HEK293 (cell line): ENCODE measurements at regions of chr9 and their contacts with region 1.

Region 1: DNA sequence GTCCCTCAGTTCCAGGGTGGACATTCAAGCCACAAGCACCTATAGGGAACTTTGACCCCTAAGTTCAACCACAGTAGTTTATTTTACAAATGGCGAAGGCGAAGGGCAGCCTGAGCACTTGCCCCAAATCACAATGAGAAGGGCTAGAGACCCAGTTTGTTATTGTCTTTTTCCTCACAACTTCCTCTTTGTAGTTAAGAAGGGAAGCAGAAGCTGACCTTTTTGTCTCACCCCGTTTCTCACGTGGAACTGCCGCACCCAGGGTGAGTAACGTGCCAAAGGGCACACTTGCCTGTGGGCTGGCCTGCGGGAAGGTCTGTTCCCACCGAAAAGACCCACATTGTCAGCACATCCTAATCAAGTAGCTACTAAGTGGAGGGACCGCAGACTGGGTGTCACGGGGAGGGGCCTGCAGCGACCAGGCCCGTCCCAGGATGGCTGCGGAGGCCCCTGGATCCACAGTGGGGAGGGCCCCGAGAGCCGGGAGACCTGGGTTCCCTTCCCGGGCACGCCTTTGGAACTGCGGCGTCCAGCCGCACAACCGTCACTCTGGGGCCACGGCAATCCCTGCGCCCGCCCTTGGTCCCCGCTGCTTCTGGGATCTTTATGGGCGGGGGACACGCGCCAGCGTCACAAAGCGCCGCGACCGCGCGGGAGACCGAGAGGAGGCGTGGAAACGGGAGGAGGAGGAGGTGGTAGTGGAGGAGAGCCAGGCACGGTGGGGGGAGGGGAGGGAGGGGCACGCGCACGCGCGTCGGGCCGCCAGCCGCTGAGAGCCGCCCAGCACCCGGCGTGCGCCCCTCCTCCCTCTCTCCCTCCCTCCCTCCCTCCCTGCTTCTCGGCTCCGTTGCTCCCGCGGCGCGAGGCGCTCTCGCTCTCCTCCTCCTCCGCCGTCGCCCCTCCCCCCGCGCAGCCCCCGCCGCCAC is at the start of gene UBE2R2:
- H3K4me3 ChIP-seq: peak within 1 kb of the TSS; percentile 60
- H3K27ac ChIP-seq: peak within 1 kb of the TSS; percentile 96
- H3K4me1 ChIP-seq: peaks cover 2% of the 10 kb centered on the region; the same call in 1 of the 2 replicates
- CTCF ChIP-seq: no peak

Region 2: DNA sequence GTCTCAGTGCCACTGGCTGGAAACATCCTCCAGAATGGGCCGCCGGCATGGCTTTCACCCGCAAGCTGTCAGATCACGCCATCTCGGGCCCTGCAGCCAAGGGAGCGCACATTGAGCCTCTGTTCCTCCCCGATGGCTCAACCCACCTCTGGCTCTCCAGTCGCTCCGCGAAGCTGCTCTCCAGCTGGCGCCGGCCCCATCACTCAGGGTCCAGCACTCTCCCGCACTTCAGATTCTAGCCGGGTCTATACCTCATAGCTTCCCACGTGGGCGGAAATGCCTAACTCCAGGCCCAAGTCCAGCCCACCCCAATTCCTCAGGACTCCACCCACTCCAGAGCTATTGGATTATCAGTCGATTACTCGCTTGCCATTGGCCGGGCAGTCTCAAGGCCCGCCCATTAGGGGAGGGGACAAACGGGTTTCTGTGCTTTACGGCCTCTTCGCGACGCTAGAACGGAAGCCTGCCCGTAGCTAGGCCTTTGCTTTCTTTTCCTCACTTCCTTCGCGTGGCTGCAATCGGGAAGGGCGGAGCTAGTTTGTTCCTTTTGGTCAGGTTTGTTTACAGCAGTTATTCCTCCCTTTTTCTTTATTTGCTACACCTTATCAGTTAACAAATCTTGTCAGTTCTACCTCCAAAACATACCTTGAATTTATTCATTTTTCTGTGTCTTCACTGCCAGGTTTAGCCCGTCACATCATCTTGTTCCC is 342.8 kb before region 1 on chr9 and contains the start of gene NOL6:
- CTCF ChIA-PET with region 1: no interaction called
- POLR2A ChIA-PET with region 1: no interaction called
- H3K4me3 ChIP-seq: peak within 1 kb of the TSS; percentile 91
- H3K27ac ChIP-seq: no peak within 1 kb of the TSS
- H3K4me1 ChIP-seq: no peaks in the 10 kb centered on the region
- CTCF ChIP-seq: no peak

Region 3: GRCh38 chr9:33614001-33614687 is 202.4 kb before region 1 on chr9:
- CTCF ChIA-PET with region 1: no interaction called
- POLR2A ChIA-PET with region 1: no interaction called
- H3K4me3 ChIP-seq: no peak overlapping the region
- H3K27ac ChIP-seq: no peak overlapping the region
- H3K4me1 ChIP-seq: no peaks in the 10 kb centered on the region
- CTCF ChIP-seq: no peak

Region 4: DNA sequence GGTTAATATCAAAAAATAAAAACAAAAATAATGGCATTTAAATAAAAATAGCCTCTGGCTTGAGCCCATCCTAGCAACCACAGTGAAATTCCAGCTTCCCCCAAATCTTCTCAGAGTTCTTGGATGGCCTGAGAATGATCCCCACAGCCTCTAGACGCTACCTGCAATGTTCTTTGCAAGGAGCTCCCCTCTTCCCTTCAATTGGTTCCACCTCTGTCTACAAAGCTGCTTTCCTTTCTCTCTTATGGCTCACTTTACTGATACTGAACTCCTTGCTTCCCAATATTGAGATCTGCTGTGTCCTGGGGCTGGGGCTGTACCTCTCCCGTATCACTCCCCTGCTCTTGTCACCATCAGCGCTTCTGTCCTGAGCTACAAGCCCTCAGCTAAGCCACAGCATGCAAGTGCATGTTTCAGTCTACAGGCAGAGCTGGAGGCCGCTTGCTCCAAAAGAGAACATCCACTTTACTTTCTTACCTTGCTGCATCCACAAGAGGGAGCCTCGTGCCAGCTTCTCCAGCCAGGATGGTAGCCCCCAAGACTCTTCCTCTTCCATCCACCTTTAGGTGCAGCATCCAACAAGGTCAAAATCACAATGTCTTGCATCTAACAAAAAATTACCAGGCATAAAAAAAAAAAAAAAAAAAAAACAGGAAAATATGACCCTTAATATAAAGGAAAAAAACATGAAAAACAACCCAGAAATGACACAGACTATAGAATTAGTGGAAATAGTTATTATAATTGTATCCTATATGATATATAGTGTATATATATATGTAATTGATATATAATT is 78.6 kb before region 1 on chr9:
- CTCF ChIA-PET with region 1: interaction called, 18 read pairs
- POLR2A ChIA-PET with region 1: interaction called, 3 read pairs
- H3K4me3 ChIP-seq: no peak overlapping the region
- H3K27ac ChIP-seq: no peak overlapping the region
- H3K4me1 ChIP-seq: no peaks in the 10 kb centered on the region
- CTCF ChIP-seq: peak; percentile 65

Region 5: DNA sequence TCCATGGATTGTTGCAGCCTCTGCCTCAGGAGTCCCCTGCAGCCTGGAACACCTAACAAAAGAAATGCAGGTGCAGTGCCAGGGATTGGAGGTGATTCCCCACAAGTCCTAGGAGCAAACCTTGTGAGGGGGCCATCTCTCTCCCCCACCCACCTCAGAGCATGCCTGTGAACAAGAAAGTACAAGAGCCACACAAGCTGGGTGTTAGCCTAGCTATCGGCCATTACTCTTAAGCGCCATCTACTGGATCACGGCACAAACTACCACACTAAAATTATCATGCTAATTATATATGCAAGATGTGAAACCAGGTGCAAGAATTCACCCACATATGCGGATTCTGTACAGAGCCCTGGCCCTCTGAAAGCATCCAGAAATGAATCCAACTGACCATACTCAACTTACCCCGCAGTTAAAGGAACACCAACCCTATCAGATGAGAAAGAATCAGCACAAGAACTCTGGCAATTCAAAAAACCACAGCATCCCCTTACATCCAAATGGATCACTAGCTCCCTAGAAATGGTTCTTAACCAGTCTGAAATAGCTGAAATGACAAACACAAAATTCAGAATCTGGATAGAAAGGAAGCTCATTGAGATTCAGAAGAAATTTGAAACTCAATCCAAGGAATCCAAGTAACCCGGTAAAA is 37.8 kb before region 1 on chr9:
- CTCF ChIA-PET with region 1: interaction called, 12 read pairs
- POLR2A ChIA-PET with region 1: no interaction called
- H3K4me3 ChIP-seq: no peak overlapping the region
- H3K27ac ChIP-seq: no peak overlapping the region
- H3K4me1 ChIP-seq: no peaks in the 10 kb centered on the region
- CTCF ChIP-seq: no peak

Region 6: DNA sequence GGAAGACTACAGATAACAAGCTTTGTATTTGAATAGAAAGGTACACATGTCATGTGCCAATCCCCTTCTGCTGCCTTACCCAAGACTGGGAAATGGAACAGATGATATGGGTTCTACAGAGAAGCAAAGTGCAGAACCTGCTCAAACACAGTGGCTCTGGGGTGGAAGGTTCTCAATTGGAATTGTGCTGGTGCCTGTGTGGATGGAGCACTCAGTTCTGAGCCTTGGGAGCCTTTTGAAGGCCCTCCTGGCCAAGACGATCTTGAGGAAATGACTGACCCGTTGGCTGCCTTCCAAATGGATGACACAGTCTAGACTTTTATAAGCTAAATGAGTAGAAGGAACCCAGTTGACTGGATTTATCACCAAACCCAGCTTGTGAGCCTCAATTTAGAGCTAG is 25.5 kb before region 1 on chr9:
- CTCF ChIA-PET with region 1: interaction called, 19 read pairs
- POLR2A ChIA-PET with region 1: no interaction called
- H3K4me3 ChIP-seq: no peak overlapping the region
- H3K27ac ChIP-seq: no peak overlapping the region
- H3K4me1 ChIP-seq: no peaks in the 10 kb centered on the region
- CTCF ChIP-seq: no peak

Region 7: DNA sequence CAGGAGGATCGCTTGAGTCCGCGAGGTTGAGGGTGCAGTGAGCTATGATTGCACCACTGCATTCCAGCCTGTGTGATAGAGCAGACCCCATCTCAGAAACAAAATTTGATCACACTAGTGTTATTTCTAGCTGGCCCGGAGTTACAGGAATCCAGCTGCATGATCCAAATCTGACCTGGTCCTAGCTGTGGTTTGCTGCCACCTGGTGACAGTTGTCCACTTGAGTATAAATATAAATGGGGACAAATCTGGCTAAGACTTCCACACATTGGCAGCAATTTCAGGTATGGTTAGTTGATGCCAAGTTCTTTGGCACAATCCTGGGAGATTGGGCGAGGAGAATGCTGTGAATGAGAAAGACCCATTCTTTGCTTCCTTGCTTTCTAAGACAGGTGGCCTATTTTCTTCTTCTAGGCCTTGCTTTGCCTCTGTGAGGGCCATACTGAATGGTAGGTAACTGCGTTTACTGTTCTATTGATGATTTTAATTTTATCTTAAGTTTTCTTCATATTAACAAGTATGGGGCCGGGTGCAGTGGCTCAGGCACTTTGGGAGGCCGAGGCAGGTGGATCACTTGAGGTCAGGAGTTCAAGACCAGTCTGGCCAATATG is 35.7 kb after region 1 on chr9:
- CTCF ChIA-PET with region 1: interaction called, 21 read pairs
- POLR2A ChIA-PET with region 1: interaction called, 7 read pairs
- H3K4me3 ChIP-seq: no peak overlapping the region
- H3K27ac ChIP-seq: no peak overlapping the region
- H3K4me1 ChIP-seq: peaks cover 15% of the 10 kb centered on the region
- CTCF ChIP-seq: peak; percentile 24; the same call in 1 of the 2 replicates

Region 8: GRCh38 chr9:33924978-33925797 is 108.6 kb after region 1 on chr9:
- CTCF ChIA-PET with region 1: interaction called, 27 read pairs
- POLR2A ChIA-PET with region 1: no interaction called
- H3K4me3 ChIP-seq: no peak overlapping the region
- H3K27ac ChIP-seq: no peak overlapping the region
- H3K4me1 ChIP-seq: no peaks in the 10 kb centered on the region
- CTCF ChIP-seq: no peak